Posterior vena cava (tissue), 2 donors: ENCODE measurements at regions of chr14 and their contacts with region 1.

Region 1: GRCh38 chr14:101347893-101348777 is 213.2 kb upstream of the DIO3 start:
- DNase-seq: peak; percentile 23

Region 2: GRCh38 chr14:101196795-101197591 is 151.1 kb before region 1 on chr14:
- intact Hi-C with region 1: no loop called
- DNase-seq: peak; percentile 77

Region 3: DNA sequence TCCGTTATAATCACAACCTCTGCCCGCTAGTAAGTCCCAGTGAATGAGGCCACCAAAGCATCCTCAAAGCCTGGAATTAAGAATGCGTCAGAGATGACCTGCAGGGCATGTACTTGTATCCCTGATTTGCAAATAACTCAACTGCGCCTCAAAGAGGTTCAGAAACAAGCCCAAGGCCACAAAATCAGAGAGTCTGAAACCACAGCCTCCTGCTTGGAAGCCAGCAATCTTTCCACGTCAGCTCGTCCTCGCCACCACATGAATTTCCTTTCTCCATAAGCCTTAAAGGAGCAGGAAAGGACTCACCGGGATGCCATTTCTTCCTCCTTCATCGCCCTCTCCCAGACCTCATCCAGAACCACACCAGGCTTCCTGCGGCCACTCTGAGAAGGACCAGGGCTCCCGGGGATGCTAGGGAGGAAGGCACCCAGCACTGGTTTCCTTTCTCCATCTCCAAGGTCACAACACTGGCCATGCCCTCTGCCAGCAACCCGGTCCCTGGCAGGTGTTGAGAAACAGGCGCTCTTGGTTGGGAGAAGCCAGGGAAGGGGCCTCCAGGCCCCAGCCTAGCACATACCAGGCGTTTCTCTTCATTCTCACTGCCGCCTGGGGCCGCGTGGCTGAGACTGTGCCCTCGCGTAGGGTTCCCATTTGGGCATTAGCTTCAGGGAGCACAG is 21.9 kb after region 1 on chr14:
- intact Hi-C with region 1: loop called in 1 of 2 experiments (anchors 1 kb)
- DNase-seq: peak; percentile 74